ENCODE measurements at regions of chr11 and their contacts with region 1.

Region 1: DNA sequence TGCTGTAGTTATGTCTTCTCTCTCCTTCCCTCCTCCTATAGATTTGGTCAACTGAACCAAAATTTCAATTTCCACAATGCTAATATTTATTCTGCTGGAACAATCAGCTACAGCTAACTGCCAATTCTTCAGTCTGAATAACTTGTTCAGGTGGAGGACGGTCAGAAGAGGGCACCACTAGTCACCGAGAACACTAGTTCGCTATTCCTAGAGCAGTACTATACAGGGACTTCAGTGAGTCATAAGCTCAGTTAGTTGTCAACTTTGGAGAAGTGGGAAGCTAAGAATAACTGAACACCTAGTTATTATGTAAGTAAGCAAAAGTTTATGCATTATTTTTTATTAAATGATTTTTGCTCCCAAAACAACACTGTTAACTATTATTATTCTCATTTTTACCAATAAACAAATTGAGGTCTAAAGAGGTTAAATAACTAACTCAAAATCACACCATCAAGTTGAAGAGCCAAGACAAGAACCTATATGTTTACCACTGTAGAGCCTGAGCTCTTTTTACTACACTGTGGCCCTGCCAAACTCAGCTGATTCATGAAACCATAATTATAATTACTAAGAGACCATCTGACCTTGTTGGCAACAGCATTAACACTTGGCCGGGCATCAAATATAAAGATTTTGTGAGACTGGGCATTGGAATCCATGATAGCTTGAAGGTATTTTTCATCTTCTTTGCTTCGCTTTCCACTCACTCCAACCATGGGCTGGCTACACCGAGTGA is 59.0 kb downstream of the CEP57 start:
- DNase-seq: no peak

Region 2: DNA sequence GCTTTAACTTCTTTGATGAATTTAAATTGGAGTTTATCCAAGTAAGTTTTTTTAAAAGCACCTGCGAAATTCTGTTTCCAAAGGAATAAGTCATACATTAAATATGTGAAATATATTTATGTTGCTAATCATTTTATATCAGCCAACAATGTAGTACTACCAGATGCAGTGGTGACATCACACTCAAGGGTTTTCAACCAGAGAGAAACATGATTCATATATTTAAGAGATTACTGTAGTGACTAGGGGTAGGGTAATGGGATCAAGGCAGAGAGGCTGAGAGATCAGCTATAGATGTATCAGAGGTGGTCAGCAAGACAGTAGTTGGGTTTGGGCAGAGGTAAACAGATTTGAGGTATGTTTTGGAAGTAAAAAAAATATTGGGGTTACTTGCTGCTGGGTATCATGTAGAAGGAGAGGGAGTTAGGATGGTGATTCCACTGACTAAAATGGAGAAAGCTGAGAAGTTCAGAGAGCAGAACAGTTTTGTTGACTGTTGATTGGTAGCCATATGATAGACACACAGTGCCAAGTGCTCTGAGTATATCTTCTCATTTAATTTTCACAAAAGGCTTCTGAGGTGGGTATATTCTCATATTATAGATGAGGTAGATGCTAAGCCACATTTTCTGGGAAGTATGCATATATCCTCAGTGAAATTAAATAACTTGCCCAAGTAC is 19.5 kb before region 1 on chr11:
- intact Hi-C with region 1: loop called in 1 of 2 experiments (anchors 1 kb)
- DNase-seq: no peak

Region 3: DNA sequence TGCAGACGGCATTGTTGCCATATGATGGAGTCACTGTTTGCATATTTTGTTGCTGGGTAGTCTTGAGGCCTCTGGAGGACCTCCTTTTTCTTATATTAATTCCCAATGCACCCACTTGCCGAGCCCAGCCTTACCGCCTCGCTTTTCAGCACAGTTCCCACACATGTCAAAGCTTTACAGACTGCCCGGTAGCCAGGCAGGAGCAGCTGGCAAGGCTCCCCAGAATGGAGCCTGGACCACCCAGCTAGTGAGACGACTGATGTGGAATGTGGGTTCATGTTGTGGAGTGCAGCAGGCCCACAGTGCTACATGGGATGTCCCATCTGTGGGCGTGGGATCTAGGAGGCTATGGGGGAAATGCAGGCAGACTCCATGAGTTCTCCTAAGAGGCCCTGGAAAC is 174.0 kb after region 1 on chr11:
- intact Hi-C with region 1: loop called in 1 of 2 experiments (anchors 10 kb)
- DNase-seq: no peak